ENCODE measurements at regions of chr11 and their contacts with region 1.

Region 1: DNA sequence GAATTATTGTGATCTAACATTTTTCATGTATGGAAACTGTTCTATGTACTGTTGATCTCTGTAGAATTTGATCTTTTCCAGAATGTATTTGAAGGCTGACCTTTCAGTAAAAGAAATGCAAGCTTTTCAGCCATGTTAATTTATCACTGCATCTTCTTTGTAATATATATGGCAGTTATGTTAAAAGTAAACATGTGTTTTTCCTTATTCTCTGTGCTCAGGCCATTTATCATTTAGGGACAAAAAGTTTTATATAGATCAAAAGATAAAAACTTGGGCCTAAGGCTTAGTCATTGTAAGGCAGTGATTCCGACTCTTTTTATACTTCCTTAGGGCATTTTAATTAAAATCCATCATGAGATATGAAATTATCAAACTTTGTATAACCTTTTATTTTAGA is 48.7 kb downstream of the KDM2A start:
- DNase-seq: no peak
- H3K4me3 ChIP-seq: no peak overlapping the region
- H3K27ac ChIP-seq: no peak overlapping the region
- H3K4me1 ChIP-seq: peaks cover 6% of the 10 kb centered on the region
- CTCF ChIP-seq: no peak

Region 2: DNA sequence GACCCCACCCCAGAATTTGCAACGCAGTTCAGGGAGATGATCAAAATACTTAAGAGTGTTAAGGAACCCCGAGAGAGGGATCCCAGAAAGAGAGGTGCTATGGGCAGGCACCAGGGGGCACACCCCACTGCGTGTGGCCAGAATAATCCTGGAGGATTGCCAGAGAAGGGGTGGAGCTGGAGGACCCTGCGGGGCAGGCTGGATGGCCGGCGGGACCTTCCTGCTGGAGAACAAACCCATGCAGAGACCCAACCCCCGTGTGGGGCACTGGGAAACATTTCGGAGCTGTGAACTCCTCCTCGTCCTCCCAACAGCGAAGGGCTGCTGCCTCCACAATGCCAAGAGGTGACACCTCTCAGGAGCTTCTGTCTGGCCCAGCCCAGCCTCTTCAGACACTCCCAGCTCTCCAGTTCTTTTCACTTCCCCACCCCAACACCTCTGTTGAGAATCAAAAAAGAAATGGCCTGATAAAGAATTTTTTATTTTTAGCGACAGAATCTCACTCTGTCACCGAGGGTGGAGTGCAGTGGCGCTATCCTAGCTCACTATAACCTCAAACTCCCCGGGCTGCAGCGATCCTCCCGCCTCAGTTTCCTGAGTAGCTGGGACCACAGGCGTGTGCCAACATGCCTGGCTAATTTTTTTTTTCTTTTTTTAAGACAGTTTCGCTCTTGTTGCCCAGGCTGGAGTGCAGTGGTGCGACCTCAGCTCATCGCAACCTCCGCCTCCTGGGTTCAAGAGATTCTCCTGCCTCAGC is 85.5 kb before region 1 on chr11:
- CTCF ChIA-PET with region 1: interaction called, 3 read pairs
- POLR2A ChIA-PET with region 1: interaction called, 3 read pairs
- intact Hi-C with region 1: loop called (anchors 2 kb)
- DNase-seq: no peak
- H3K4me3 ChIP-seq: no peak overlapping the region
- H3K27ac ChIP-seq: no peak overlapping the region
- H3K4me1 ChIP-seq: peaks cover 12% of the 10 kb centered on the region
- CTCF ChIP-seq: no peak

Region 3: DNA sequence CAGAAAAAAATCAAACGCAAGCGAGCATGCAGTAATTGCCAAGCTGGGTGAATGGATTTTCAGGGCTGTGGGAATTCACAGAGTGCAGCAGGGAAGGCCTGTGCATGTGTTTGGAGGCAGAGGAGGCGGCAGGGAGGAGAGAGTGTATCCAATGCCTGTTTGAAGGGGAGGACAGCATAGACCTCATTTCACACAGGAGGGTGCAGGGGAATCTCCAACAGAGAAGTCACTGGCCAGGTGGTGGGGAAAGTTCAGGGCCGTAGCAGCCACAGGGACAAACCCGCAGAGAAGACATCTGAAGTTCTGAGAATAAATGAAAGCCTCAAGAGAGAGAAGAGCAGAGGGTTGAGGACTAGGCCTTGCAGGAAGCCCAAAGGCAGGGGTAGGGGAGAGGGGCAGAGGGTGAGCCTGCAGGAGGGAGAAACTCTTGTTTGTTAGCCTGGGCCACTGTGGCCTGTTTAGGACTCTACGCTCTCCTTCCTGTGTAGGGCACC is 67.8 kb before region 1 on chr11:
- CTCF ChIA-PET with region 1: no interaction called
- POLR2A ChIA-PET with region 1: no interaction called
- intact Hi-C with region 1: loop called (anchors 2 kb)
- DNase-seq: peak; percentile 27
- H3K4me3 ChIP-seq: no peak overlapping the region
- H3K27ac ChIP-seq: no peak overlapping the region
- H3K4me1 ChIP-seq: peaks cover 20% of the 10 kb centered on the region
- CTCF ChIP-seq: no peak

Region 4: GRCh38 chr11:67211656-67212436 is 44.1 kb after region 1 on chr11:
- CTCF ChIA-PET with region 1: no interaction called
- POLR2A ChIA-PET with region 1: no interaction called
- intact Hi-C with region 1: no loop called
- DNase-seq: no peak
- H3K4me3 ChIP-seq: no peak overlapping the region
- H3K27ac ChIP-seq: peak overlapping the region; percentile 81
- H3K4me1 ChIP-seq: peaks cover 24% of the 10 kb centered on the region
- CTCF ChIP-seq: no peak

Measured in OCI-LY7 (cell line).